CD4-positive, alpha-beta T cell (primary cell): ENCODE measurements at regions of chr6 and their contacts with region 1.

Region 1: GRCh38 chr6:31493875-31494694 is 3.9 kb upstream of the MICB start:
- DNase-seq: peak; percentile 51 to 91 (median 74)
- ATAC-seq: peak; percentile 39
- H3K4me3 ChIP-seq: peak overlapping the region; percentile 88
- H3K4me3 Mint-ChIP-seq: peak overlapping the region; percentile 58
- H3K27ac ChIP-seq: peak overlapping the region; percentile 65 to 68
- H3K27ac Mint-ChIP-seq: peak overlapping the region; percentile 83
- H3K4me1 ChIP-seq: peaks cover 69% of the 10 kb centered on the region
- H3K4me1 Mint-ChIP-seq: peaks cover 57% of the 10 kb centered on the region
- H3K27me3 ChIP-seq: no peaks in the 10 kb centered on the region
- H3K27me3 Mint-ChIP-seq: no peaks in the 10 kb centered on the region
- CTCF ChIP-seq: peak; percentile 80

Region 2: DNA sequence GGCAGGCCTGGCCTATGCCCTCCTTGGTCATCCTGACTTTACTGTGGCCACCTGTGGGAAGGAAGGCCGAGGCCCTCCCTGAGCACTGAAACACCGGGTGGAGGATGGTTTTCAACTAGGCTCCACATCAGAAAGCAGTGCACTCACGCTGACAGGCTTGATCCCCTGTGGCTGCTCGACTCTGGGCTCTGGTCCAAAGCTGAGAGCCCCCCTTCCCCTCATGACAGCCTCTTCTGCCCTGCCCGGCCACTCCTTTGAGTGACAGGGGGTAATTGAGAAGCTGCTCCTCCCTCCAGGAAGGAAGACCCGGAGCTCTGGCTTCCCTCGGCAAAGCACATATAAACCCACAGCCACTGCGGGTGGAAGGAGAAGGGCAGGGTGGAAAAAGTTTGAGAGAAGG is 440.2 kb before region 1 on chr6:
- CTCF ChIA-PET with region 1: no interaction called
- POLR2A ChIA-PET with region 1: no interaction called
- intact Hi-C with region 1: no loop called
- DNase-seq: no peak
- ATAC-seq: no peak
- H3K4me3 ChIP-seq: no peak overlapping the region
- H3K4me3 Mint-ChIP-seq: no peak overlapping the region
- H3K27ac ChIP-seq: no peak overlapping the region
- H3K27ac Mint-ChIP-seq: no peak overlapping the region
- H3K4me1 ChIP-seq: peaks cover 2% of the 10 kb centered on the region
- H3K4me1 Mint-ChIP-seq: no peaks in the 10 kb centered on the region
- H3K27me3 ChIP-seq: peaks cover 6 to 9% of the 10 kb centered on the region in 2 experiments
- H3K27me3 Mint-ChIP-seq: peaks cover 44% of the 10 kb centered on the region
- CTCF ChIP-seq: no peak

Region 3: DNA sequence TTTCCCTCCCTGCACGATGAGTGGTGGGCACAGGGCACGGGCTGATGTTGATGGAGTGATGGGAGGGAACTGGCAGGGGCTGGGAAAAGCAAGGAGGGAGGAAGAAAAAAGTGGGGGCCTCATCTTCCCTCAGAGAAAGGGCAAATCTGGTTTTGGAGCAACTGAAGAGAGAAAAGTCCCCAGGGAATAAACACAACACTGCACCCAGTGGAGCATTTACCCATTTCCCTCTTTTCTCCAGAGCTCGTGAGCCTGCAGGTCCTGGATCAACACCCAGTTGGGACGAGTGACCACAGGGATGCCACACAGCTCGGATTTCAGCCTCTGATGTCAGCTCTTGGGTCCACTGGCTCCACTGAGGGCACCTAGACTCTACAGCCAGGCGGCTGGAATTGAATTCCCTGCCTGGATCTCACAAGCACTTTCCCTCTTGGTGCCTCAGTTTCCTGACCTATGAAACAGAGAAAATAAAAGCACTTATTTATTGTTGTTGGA is 79.3 kb before region 1 on chr6:
- CTCF ChIA-PET with region 1: no interaction called
- POLR2A ChIA-PET with region 1: no interaction called
- intact Hi-C with region 1: no loop called
- DNase-seq: no peak
- ATAC-seq: no peak
- H3K4me3 ChIP-seq: no peak overlapping the region
- H3K4me3 Mint-ChIP-seq: no peak overlapping the region
- H3K27ac ChIP-seq: no peak overlapping the region
- H3K27ac Mint-ChIP-seq: no peak overlapping the region
- H3K4me1 ChIP-seq: no peaks in the 10 kb centered on the region
- H3K4me1 Mint-ChIP-seq: peaks cover 11% of the 10 kb centered on the region
- H3K27me3 ChIP-seq: no peaks in the 10 kb centered on the region
- H3K27me3 Mint-ChIP-seq: no peaks in the 10 kb centered on the region
- CTCF ChIP-seq: no peak

Region 4: DNA sequence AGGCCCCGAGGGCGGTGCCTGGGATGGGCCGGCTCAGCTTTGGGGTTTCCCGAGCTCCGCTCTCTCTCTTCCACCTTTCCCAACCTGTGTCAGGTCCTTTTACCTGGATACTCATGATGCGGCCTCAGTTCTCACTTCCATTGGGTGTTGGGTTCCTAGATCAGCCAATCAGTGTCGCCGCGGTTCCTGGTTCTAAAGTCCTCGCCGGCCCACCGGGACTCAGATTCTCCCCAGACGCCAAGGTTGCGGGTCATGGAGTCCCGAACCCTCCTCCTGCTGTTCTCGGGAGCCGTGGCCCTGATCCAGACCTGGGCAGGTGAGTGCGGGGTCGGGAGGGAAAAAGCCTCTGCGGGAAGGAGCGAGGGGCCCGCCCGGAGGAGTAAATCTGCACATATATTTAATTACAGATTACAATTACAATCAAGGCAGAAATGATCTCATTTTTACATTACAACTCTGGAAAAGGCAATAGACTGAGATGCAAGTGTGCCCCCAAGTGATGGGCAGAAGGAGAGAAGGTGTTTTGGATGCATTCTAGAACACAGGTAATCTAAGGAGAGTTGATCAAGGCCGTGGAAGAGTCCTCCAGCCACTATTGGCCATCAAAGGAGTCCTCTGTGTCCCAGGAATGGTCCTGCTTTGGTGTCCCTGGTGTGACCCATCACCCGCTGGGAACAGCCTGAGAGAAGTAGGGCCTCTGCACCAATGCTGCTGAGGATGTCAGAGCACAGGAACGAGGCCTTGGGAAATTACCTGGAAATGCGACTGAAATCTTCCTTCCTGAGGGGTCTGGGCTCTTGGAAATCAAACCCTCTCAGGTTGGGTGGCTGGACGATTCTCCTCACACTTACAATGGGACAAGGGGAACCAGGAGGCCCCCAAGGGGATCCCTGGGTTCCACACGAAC is 30.9 kb before region 1 on chr6:
- CTCF ChIA-PET with region 1: no interaction called
- POLR2A ChIA-PET with region 1: interaction called, 4 read pairs
- intact Hi-C with region 1: loop called in 1 of 2 experiments (anchors 5 kb)
- DNase-seq: peak; percentile 81 to 97 (median 87)
- ATAC-seq: peak; percentile 97
- H3K4me3 ChIP-seq: peak overlapping the region; percentile 89
- H3K4me3 Mint-ChIP-seq: peak overlapping the region; percentile 99
- H3K27ac ChIP-seq: peak overlapping the region; percentile 91 to 99
- H3K27ac Mint-ChIP-seq: peak overlapping the region; percentile 96
- H3K4me1 ChIP-seq: peaks cover 58% of the 10 kb centered on the region
- H3K4me1 Mint-ChIP-seq: peaks cover 69% of the 10 kb centered on the region
- H3K27me3 ChIP-seq: no peaks in the 10 kb centered on the region
- H3K27me3 Mint-ChIP-seq: peaks cover 6% of the 10 kb centered on the region
- CTCF ChIP-seq: no peak

Region 5: GRCh38 chr6:31680840-31681671 is 187.0 kb after region 1 on chr6 and contains the start of gene LY6G5C:
- CTCF ChIA-PET with region 1: no interaction called
- POLR2A ChIA-PET with region 1: no interaction called
- intact Hi-C with region 1: no loop called
- DNase-seq: peak in 13 of 14 experiments; percentile 45 to 83 (median 61)
- ATAC-seq: peak; percentile 71
- H3K4me3 ChIP-seq: peak within 1 kb of the TSS; percentile 79
- H3K4me3 Mint-ChIP-seq: peak within 1 kb of the TSS; percentile 87
- H3K27ac ChIP-seq: peak within 1 kb of the TSS in 1 of 2 donors; percentile 44
- H3K27ac Mint-ChIP-seq: peak within 1 kb of the TSS; percentile 35
- H3K4me1 ChIP-seq: peaks cover 21% of the 10 kb centered on the region
- H3K4me1 Mint-ChIP-seq: peaks cover 19% of the 10 kb centered on the region
- H3K27me3 ChIP-seq: no peaks in the 10 kb centered on the region
- H3K27me3 Mint-ChIP-seq: no peaks in the 10 kb centered on the region
- CTCF ChIP-seq: peak; percentile 71
- total RNA-seq, gene LY6G5C: 0.49 to 0.67 TPM